ENCODE measurements at regions of chr4 and their contacts with region 1.

Region 1: DNA sequence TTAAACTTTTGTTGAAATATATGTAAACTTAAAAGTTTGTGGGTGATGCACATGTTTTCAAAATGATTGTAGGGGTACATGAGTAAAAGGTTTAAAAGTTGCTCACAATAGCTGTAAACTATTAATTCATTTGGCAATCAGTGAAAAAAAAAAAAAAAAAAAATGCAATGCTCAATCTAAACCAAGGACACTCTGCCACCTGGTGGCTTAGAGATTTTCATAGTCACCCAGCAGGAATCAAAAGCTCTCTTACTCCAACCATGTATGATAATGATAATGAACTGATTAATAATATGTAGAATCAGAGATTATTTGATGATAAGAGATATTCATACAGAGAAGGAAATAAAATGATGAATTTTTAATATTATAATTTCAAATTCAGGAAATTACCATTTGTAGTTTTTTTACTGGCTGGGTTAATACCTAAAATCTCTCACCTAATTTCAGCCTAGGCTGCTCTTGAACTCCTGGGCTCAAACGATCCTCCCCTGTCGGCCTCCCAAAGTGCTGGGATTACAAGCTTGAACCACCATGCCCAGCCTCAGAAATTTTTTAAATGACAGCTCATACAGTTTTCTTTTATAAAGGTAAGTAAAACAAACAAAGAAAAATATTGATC is 46.9 kb upstream of the SLC25A4 start:
- DNase-seq: no peak
- ATAC-seq: no peak
- H3K4me3 Mint-ChIP-seq: no peak overlapping the region
- H3K27ac Mint-ChIP-seq: no peak overlapping the region
- H3K4me1 Mint-ChIP-seq: peaks cover 28% of the 10 kb centered on the region
- H3K27me3 Mint-ChIP-seq: no peaks in the 10 kb centered on the region
- CTCF ChIP-seq: no peak

Region 2: GRCh38 chr4:184825896-184826690 is 270.1 kb before region 1 on chr4 and contains the start of gene ACSL1:
- CTCF ChIA-PET with region 1: no interaction called
- POLR2A ChIA-PET with region 1: no interaction called
- DNase-seq: peak; percentile 75
- ATAC-seq: peak; percentile 84
- H3K4me3 Mint-ChIP-seq: peak within 1 kb of the TSS; percentile 83
- H3K27ac Mint-ChIP-seq: no peak within 1 kb of the TSS
- H3K4me1 Mint-ChIP-seq: peaks cover 7% of the 10 kb centered on the region
- H3K27me3 Mint-ChIP-seq: peaks cover 56% of the 10 kb centered on the region
- CTCF ChIP-seq: no peak
- total RNA-seq, gene ACSL1: 5.1 to 6.6 TPM (median 5.9 TPM) in 3 replicates

Region 3: DNA sequence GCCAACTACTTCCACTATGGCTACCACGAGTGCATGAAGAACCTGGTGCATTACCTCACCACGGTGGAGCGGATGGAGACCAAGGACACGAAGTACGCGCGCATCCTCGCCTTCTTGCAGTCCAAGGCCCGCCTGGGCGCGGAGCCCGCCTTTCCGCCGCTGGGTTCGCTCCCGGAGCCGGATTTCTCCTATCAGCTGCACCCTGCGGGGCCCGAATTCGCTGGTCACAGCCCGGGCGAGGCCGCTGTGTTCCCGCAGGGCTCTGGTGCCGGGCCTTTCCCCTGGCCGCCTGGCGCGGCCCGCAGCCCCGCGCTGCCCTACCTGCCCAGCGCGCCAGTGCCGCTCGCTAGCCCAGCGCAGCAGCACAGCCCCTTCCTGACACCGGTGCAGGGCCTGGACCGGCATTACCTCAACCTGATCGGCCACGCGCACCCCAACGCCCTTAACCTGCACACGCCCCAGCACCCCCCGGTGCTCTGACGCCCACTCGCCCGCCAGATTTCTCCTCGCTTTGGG is 75.8 kb before region 1 on chr4:
- CTCF ChIA-PET with region 1: interaction called, 11 read pairs
- POLR2A ChIA-PET with region 1: interaction called, 3 read pairs
- DNase-seq: peak; percentile 74
- ATAC-seq: peak; percentile 11
- H3K4me3 Mint-ChIP-seq: peak overlapping the region; percentile 65
- H3K27ac Mint-ChIP-seq: no peak overlapping the region
- H3K4me1 Mint-ChIP-seq: peaks cover 46% of the 10 kb centered on the region
- H3K27me3 Mint-ChIP-seq: peaks cover 100% of the 10 kb centered on the region
- CTCF ChIP-seq: no peak

Region 4: DNA sequence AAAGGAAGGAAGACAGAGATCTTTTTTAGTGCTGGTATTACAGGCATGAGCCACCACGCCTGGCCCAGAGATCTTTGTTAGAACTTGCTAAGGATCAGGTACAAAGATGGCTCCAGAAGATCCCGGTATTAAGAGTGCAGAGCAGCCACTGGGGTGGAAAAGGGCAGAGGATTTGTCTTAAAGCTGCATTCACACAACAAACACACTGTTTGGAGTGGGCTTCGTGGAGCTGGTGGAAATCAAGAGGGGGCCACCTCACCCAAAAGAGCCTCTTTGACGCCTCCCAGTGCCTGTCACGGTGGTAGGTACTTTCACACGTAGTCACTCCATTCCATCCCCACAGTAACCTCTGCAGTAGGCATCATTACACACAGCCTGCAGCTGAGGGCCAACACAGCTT is 64.5 kb before region 1 on chr4:
- CTCF ChIA-PET with region 1: interaction called, 12 read pairs
- POLR2A ChIA-PET with region 1: interaction called, 4 read pairs
- DNase-seq: no peak
- ATAC-seq: no peak
- H3K4me3 Mint-ChIP-seq: no peak overlapping the region
- H3K27ac Mint-ChIP-seq: no peak overlapping the region
- H3K4me1 Mint-ChIP-seq: 0 out of 2 replicates have a peak, but pooled peaks cover 2% of the 10 kb centered on the region
- H3K27me3 Mint-ChIP-seq: peaks cover 61% of the 10 kb centered on the region
- CTCF ChIP-seq: no peak

Region 5: DNA sequence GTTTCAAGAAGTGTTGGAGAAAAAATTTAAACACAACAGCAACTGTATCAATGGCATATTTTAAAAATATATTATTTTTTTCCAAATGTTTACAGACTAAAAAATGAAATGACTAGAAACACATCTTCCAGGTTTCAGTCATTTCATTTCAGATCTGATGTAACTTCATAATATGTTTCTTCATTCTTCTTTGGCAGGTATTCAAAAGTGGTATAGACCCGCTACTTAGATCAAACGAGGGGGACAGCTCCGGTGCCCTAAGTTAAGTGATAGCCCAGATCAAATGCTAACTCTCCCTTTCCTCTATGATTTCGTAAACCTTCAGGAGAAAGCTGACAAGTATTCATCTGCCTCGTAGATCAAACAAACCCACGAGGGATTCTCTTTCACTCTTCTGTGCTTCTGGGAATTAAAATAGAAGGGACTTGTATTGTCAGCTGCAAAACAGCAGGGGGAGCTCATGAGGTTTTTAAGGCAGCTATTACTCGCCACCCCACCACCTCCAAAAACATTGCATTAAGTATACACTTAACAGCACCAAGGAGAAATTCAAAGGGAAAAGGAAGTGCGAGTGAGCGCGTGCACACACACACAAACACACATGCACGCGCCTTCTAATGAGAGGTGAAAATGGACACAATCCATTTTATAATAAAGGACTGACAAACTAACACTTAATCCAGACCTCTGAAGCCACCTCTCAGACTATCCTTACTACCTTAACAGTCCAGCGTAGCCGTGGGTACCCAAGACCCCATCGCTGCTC is 56.5 kb before region 1 on chr4:
- CTCF ChIA-PET with region 1: interaction called, 79 read pairs
- POLR2A ChIA-PET with region 1: interaction called, 6 read pairs
- DNase-seq: no peak
- ATAC-seq: peak; percentile 84
- H3K4me3 Mint-ChIP-seq: no peak overlapping the region
- H3K27ac Mint-ChIP-seq: no peak overlapping the region
- H3K4me1 Mint-ChIP-seq: peaks cover 16% of the 10 kb centered on the region
- H3K27me3 Mint-ChIP-seq: peaks cover 8% of the 10 kb centered on the region
- CTCF ChIP-seq: peak; percentile 72

Region 6: DNA sequence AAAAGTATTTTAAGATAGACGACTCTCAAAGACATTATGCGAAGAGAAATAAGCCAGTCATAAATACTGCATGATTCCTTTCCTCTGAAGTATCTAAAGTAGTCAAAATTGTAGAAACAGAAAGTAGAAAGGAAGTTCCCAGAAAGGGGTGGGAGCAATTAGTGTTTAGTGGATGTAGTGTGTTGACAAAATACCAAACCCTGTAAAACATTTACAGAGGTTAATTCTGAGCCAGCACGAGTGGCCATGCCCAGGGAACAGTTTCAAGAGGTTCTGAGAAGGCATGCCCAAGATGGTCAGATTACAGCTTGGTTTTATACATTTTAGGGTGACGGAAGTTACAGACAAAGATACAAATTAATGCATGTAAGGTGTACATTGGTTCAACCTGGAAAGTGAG is 12.5 kb after region 1 on chr4:
- CTCF ChIA-PET with region 1: interaction called, 15 read pairs
- POLR2A ChIA-PET with region 1: interaction called, 4 read pairs
- DNase-seq: no peak
- ATAC-seq: no peak
- H3K4me3 Mint-ChIP-seq: no peak overlapping the region
- H3K27ac Mint-ChIP-seq: peak overlapping the region; percentile 96
- H3K4me1 Mint-ChIP-seq: peaks cover 64% of the 10 kb centered on the region
- H3K27me3 Mint-ChIP-seq: no peaks in the 10 kb centered on the region
- CTCF ChIP-seq: no peak

Region 7: DNA sequence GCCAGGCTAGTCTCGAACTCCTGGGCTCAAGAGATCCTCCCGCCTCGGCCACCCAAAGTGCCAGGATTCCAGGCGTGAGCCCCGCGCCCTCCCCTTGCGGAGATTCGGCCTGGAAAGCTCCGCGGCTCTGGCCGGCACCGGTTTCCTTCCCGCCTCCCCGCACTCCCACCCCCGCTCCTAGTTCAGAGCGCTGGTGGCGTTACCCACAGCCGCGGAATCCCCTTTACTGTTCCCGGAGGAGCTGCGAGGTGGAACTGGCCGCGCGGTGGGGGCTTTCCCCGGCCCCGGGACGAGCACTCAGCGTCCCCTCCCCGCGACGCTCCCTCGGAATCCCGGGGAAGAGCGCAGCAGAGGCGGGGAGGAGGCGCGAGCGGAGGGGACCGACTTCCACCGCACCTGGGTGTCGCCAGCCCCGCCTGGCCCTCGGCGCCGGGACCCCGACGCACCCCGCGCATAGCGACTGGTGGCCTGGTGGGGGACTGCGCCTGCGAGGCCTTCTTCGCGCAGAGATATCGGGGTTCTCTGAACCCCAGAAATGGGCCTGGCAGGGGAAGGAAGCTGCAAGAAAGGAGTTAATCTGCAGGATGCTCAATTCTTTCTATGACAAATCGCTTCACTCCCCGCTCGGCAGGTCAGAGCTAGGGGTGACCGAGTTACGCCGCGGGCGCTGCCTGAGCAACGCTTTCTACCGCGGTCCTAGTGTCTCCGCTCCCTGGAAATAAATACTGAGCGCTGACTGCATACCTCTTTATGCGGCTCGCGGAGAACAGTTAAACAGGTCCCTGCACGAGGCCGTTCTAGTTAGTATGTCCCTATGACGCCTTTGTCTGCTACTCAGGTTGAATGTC is 32.4 kb after region 1 on chr4:
- CTCF ChIA-PET with region 1: interaction called, 11 read pairs
- POLR2A ChIA-PET with region 1: no interaction called
- DNase-seq: peak; percentile 65
- ATAC-seq: peak; percentile 74
- H3K4me3 Mint-ChIP-seq: peak overlapping the region; percentile 73
- H3K27ac Mint-ChIP-seq: no peak overlapping the region; the same call in 1 of the 2 replicates
- H3K4me1 Mint-ChIP-seq: peaks cover 12% of the 10 kb centered on the region
- H3K27me3 Mint-ChIP-seq: peaks cover 35% of the 10 kb centered on the region
- CTCF ChIP-seq: no peak

Measured in WTC11 (cell line).